ENCODE measurements at regions of chrX and their contacts with region 1.

Region 1: DNA sequence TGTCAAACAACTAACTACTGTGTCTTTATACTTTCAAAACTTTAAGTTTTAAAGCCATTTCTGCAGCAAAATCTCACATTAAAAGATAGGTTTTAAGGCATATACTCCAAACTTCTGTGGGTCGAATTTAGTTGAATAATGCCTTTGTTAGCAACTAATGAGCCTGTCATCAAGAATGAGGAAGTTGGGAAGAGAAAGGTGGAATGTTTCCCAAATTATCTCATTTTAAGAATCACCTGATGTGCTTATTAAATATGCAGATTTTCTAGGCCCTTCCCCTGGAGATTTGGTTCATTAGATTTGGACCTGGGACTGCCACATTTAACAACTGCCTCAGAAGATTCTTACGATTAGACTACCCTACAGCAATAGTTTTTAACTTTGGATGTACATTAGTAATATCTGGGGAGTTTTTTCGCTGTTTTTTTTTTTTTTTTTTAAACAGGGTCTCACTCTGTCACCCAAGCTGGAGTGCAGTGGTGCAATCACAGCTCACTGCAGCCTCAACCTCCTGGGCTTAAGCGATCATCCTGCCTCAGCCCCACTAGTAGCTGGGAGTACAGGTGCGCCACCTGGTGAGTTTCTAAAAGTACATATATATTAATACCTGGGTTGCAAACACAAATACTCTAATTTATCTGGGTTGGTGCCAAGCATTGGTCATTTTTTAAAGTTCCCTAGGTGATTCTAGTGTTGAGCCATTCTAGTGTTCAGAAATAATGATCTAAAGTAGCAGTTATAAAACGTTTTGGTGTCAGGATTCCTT is 16.1 kb upstream of the TASL start:
- DNase-seq: peak; percentile 62
- ATAC-seq: peak; percentile 46
- H3K4me3 ChIP-seq: peak overlapping the region in 1 of 5 experiments; percentile 6
- H3K4me3 Mint-ChIP-seq: peak overlapping the region; percentile 70
- H3K27ac ChIP-seq: peak overlapping the region; percentile 65 to 73
- H3K27ac Mint-ChIP-seq: peak overlapping the region; percentile 87
- H3K4me1 ChIP-seq: peaks cover 60 to 61% of the 10 kb centered on the region in 2 donors
- H3K4me1 Mint-ChIP-seq: peaks cover 68% of the 10 kb centered on the region
- H3K27me3 ChIP-seq: no peaks in the 10 kb centered on the region
- H3K27me3 Mint-ChIP-seq: no peaks in the 10 kb centered on the region
- CTCF ChIP-seq: peak; percentile 36

Region 2: DNA sequence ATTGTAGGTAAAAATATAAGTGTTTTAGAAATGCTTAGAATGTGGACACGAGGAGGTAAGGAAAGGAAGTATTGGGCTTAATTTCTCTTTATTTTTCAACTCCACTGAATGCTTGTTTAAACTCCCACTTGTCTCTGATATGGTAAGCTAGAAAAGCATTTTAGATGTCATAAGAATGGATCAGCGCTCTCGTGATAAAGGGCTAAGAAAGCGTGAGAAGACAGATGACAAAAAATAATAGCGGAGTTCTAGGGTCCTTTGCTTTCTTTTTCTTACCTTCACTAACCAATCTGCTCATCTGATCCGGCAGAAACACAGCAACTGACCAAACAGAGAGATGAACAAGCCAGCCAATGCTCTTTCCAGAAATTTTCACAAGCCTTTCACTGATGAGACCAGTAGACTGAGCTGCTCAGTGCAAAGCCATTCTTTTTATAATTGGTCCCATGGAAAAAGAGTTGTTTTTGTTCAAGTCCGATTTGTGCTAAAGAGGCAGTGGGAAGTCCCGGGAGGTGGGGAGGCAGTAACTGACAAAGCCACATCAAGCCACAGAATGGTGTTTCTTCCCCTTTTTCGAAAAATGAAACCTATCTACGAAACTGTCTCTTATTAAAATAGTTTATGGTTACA is 16.1 kb before region 1 on chrX and contains the start of gene TASL:
- CTCF ChIA-PET with region 1: interaction called, 65 read pairs
- POLR2A ChIA-PET with region 1: interaction called, 5 read pairs
- intact Hi-C with region 1: no loop called
- DNase-seq: peak; percentile 81
- ATAC-seq: peak; percentile 85
- H3K4me3 ChIP-seq: peak within 1 kb of the TSS; percentile 55 to 96 (median 76)
- H3K4me3 Mint-ChIP-seq: peak within 1 kb of the TSS; percentile 99
- H3K27ac ChIP-seq: peak within 1 kb of the TSS; percentile 85 to 95
- H3K27ac Mint-ChIP-seq: peak within 1 kb of the TSS; percentile 99
- H3K4me1 ChIP-seq: peaks cover 20% of the 10 kb centered on the region in 2 donors
- H3K4me1 Mint-ChIP-seq: peaks cover 27% of the 10 kb centered on the region
- H3K27me3 ChIP-seq: no peaks in the 10 kb centered on the region
- H3K27me3 Mint-ChIP-seq: no peaks in the 10 kb centered on the region
- CTCF ChIP-seq: no peak
- total RNA-seq, gene TASL: 25.4 and 27.0 TPM in 2 replicates

Region 3: GRCh38 chrX:30612250-30612655 is 18.6 kb after region 1 on chrX:
- CTCF ChIA-PET with region 1: no interaction called
- POLR2A ChIA-PET with region 1: interaction called, 12 read pairs
- intact Hi-C with region 1: no loop called
- DNase-seq: no peak
- ATAC-seq: no peak
- H3K4me3 ChIP-seq: peak overlapping the region in 1 of 5 experiments; percentile 25
- H3K4me3 Mint-ChIP-seq: no peak overlapping the region
- H3K27ac ChIP-seq: no peak overlapping the region
- H3K27ac Mint-ChIP-seq: no peak overlapping the region
- H3K4me1 ChIP-seq: no peaks in the 10 kb centered on the region
- H3K4me1 Mint-ChIP-seq: peaks cover 2% of the 10 kb centered on the region
- H3K27me3 ChIP-seq: no peaks in the 10 kb centered on the region
- H3K27me3 Mint-ChIP-seq: no peaks in the 10 kb centered on the region
- CTCF ChIP-seq: no peak

Region 4: DNA sequence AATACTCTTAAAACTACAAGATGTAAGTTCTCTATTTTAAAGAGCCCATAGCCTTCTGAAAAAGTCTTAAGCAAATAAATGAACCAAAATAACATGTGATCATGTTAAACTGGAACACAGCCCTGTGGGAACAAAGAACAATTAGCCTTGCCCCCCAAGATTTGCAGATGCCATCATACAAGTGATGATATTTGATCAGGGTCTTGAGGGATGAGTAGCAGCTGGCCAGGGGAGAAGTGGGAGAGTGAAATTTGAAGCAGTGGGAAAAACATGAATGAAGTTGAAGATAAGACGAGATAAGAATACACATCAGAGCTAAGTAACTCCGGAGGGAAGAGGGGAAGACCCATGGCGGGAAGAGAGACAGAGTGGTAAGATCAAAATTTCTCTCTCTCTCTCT is 928.3 kb after region 1 on chrX:
- CTCF ChIA-PET with region 1: no interaction called
- POLR2A ChIA-PET with region 1: no interaction called
- intact Hi-C with region 1: no loop called
- DNase-seq: no peak
- ATAC-seq: no peak
- H3K4me3 ChIP-seq: no peak overlapping the region
- H3K4me3 Mint-ChIP-seq: no peak overlapping the region
- H3K27ac ChIP-seq: no peak overlapping the region
- H3K27ac Mint-ChIP-seq: no peak overlapping the region
- H3K4me1 ChIP-seq: no peaks in the 10 kb centered on the region
- H3K4me1 Mint-ChIP-seq: no peaks in the 10 kb centered on the region
- H3K27me3 ChIP-seq: no peaks in the 10 kb centered on the region
- H3K27me3 Mint-ChIP-seq: no peaks in the 10 kb centered on the region
- CTCF ChIP-seq: no peak